Natural killer cell (primary cell): ENCODE measurements at regions of chr2 and their contacts with region 1.

Region 1: DNA sequence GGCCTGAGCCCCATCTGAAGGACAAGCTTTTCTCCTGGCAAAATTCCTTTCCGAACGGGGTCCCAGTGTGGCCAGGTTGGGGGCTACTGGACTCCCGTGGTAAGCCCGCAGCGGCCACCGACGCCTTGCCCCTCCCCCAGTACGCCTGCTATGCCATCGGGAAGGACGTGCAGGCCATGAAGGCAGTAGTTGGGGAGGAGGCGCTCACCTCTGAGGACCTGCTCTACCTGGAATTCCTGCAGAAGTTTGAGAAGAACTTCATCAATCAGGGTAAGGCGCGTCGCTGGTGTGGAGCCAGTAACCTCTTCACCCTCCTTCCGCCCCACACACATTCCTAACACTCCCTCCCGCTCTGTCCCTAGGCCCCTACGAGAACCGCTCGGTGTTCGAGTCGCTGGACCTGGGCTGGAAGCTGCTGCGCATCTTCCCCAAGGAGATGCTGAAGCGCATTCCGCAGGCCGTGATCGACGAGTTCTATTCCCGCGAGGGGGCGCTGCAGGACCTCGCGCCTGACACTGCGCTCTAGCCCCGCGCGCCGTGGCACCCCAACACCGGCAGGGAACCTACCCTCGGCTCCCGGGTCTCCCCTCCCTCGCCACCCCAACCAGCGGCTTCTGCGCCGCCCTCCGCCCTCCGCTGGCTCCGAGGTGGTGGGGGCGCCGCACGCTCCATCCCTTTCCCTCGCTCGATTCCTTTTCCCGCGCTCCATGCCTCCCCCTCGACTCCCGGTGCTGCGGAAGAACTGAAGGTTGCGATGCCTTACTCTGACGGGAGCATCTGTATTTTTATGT is 13.6 kb upstream of the ANKRD53 start:
- DNase-seq: peak; percentile 81 to 92
- ATAC-seq: peak; percentile 90 to 98 (median 95)
- H3K4me3 ChIP-seq: peak overlapping the region; percentile 47
- H3K4me3 Mint-ChIP-seq: peak overlapping the region; percentile 92
- H3K27ac ChIP-seq: no peak overlapping the region
- H3K27ac Mint-ChIP-seq: peak overlapping the region in 1 of 2 donors; percentile 58
- H3K4me1 ChIP-seq: peaks cover 11% of the 10 kb centered on the region
- H3K4me1 Mint-ChIP-seq: peaks cover 9 to 11% of the 10 kb centered on the region in 2 donors
- H3K27me3 ChIP-seq: peaks cover 15% of the 10 kb centered on the region
- H3K27me3 Mint-ChIP-seq: peaks cover 12 to 19% of the 10 kb centered on the region in 2 donors
- CTCF ChIP-seq: peak; percentile 95

Region 2: GRCh38 chr2:70984576-70985282 is 19.9 kb after region 1 on chr2:
- intact Hi-C with region 1: loop called (anchors 2 kb)
- DNase-seq: peak; percentile 81 to 89
- ATAC-seq: peak; percentile 99 to 100 (median 100)
- H3K4me3 ChIP-seq: no peak overlapping the region
- H3K4me3 Mint-ChIP-seq: peak overlapping the region; percentile 60
- H3K27ac ChIP-seq: no peak overlapping the region
- H3K27ac Mint-ChIP-seq: peak overlapping the region in 1 of 2 donors; percentile 75
- H3K4me1 ChIP-seq: peaks cover 10% of the 10 kb centered on the region
- H3K4me1 Mint-ChIP-seq: peaks cover 6 to 10% of the 10 kb centered on the region in 2 donors
- H3K27me3 ChIP-seq: no peaks in the 10 kb centered on the region
- H3K27me3 Mint-ChIP-seq: no peaks in the 10 kb centered on the region
- CTCF ChIP-seq: peak; percentile 92

Region 3: GRCh38 chr2:70994756-70995729 is 30.3 kb after region 1 on chr2 and contains the start of gene TEX261:
- intact Hi-C with region 1: loop called (anchors 1 kb)
- DNase-seq: peak; percentile 90 to 92
- ATAC-seq: peak; percentile 96 to 99 (median 98)
- H3K4me3 ChIP-seq: peak within 1 kb of the TSS; percentile 90
- H3K4me3 Mint-ChIP-seq: peak within 1 kb of the TSS; percentile 91
- H3K27ac ChIP-seq: peak within 1 kb of the TSS; percentile 71
- H3K27ac Mint-ChIP-seq: peak within 1 kb of the TSS; percentile 86 to 92
- H3K4me1 ChIP-seq: peaks cover 27% of the 10 kb centered on the region
- H3K4me1 Mint-ChIP-seq: peaks cover 33 to 35% of the 10 kb centered on the region in 2 donors
- H3K27me3 ChIP-seq: no peaks in the 10 kb centered on the region
- H3K27me3 Mint-ChIP-seq: no peaks in the 10 kb centered on the region
- CTCF ChIP-seq: peak; percentile 54
- total RNA-seq, gene TEX261: 30.3 to 44.2 (median 43.2) TPM

Region 4: GRCh38 chr2:71000780-71001591 is 36.2 kb after region 1 on chr2:
- intact Hi-C with region 1: loop called (anchors 1 kb)
- DNase-seq: peak; percentile 75 to 91
- ATAC-seq: peak; percentile 96 to 100 (median 100)
- H3K4me3 ChIP-seq: peak overlapping the region; percentile 18
- H3K4me3 Mint-ChIP-seq: peak overlapping the region; percentile 62
- H3K27ac ChIP-seq: no peak overlapping the region
- H3K27ac Mint-ChIP-seq: peak overlapping the region in 1 of 2 donors; percentile 70
- H3K4me1 ChIP-seq: peaks cover 10% of the 10 kb centered on the region
- H3K4me1 Mint-ChIP-seq: peaks cover 9 to 10% of the 10 kb centered on the region in 2 donors
- H3K27me3 ChIP-seq: no peaks in the 10 kb centered on the region
- H3K27me3 Mint-ChIP-seq: peaks cover 0 to 4% of the 10 kb centered on the region in 2 donors
- CTCF ChIP-seq: peak; percentile 91